GM12878 (cell line): ENCODE measurements at regions of chr9 and their contacts with region 1.

Region 1: GRCh38 chr9:124066783-124067563 is 55.4 kb downstream of the LHX2 start:
- DNase-seq: no peak
- ATAC-seq: no peak
- H3K4me3 ChIP-seq: no peak overlapping the region
- H3K27ac ChIP-seq: no peak overlapping the region
- H3K4me1 ChIP-seq: no peaks in the 10 kb centered on the region
- H3K27me3 ChIP-seq: peaks cover 0 to 3% of the 10 kb centered on the region in 2 experiments; a peak in 1 of 4 replicates
- CTCF ChIP-seq: no peak
- EP300 ChIP-seq: no peak
- POLR2A ChIP-seq: no peak
- RAD21 ChIP-seq: no peak

Region 2: DNA sequence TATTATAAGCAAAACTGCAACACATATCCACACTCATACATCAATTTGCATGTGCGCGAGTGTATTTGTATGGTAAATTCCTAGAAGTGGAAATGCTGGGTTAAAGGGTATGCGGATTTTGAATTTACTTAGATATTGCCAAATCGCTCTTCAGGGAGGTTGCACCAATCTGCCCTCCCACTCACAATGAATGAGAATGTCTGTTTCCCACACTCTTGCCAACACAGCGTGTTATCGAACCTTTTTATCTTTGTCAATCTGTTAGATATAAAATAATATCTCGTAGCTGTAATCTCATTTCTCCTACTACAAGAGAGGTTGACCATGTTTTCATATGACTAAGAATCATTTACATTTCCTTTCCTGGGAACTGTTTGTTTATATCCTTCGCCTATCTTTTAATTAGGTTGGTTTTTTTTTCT is 19.7 kb before region 1 on chr9:
- CTCF ChIA-PET with region 1: no interaction called
- POLR2A ChIA-PET with region 1: no interaction called
- RAD21 ChIA-PET with region 1: no interaction called
- SMC1A ChIA-PET with region 1: no interaction called
- in situ Hi-C with region 1: no loop called
- intact Hi-C with region 1: no loop called
- DNase-seq: no peak
- ATAC-seq: no peak
- H3K4me3 ChIP-seq: no peak overlapping the region
- H3K27ac ChIP-seq: no peak overlapping the region
- H3K4me1 ChIP-seq: no peaks in the 10 kb centered on the region
- H3K27me3 ChIP-seq: peaks cover 2 to 4% of the 10 kb centered on the region in 2 experiments
- CTCF ChIP-seq: no peak
- EP300 ChIP-seq: no peak
- POLR2A ChIP-seq: no peak
- RAD21 ChIP-seq: no peak

Region 3: GRCh38 chr9:124110307-124110915 is 43.4 kb after region 1 on chr9:
- CTCF ChIA-PET with region 1: no interaction called
- POLR2A ChIA-PET with region 1: no interaction called
- RAD21 ChIA-PET with region 1: no interaction called
- SMC1A ChIA-PET with region 1: no interaction called
- in situ Hi-C with region 1: no loop called
- intact Hi-C with region 1: loop called (anchors 1 kb)
- DNase-seq: no peak
- ATAC-seq: peak; percentile 74
- H3K4me3 ChIP-seq: no peak overlapping the region
- H3K27ac ChIP-seq: no peak overlapping the region
- H3K4me1 ChIP-seq: no peaks in the 10 kb centered on the region
- H3K27me3 ChIP-seq: no peaks in the 10 kb centered on the region; a peak in 1 of 4 replicates
- CTCF ChIP-seq: no peak
- EP300 ChIP-seq: no peak
- POLR2A ChIP-seq: no peak
- RAD21 ChIP-seq: no peak

Region 4: DNA sequence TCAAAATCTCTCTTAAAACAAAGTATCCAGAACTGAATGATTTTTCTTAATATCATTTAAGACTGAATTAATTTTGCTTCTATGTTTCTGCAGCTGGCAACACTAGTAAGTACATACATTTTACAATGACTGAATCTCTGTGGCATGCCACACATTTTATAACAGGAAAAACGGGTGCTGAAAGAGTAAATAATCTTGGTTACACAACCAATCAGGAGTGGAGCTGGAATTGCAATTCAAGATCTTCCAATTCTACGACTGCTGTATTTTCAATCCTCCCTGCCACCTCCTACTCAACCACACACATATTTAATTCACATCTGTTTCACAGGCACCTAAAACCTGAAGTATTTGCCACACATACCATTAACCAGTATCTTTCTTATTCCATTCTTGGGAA is 492.9 kb after region 1 on chr9:
- CTCF ChIA-PET with region 1: no interaction called
- POLR2A ChIA-PET with region 1: no interaction called
- RAD21 ChIA-PET with region 1: no interaction called
- SMC1A ChIA-PET with region 1: no interaction called
- in situ Hi-C with region 1: no loop called
- intact Hi-C with region 1: no loop called
- DNase-seq: no peak
- ATAC-seq: no peak
- H3K4me3 ChIP-seq: no peak overlapping the region
- H3K27ac ChIP-seq: no peak overlapping the region
- H3K4me1 ChIP-seq: no peaks in the 10 kb centered on the region
- H3K27me3 ChIP-seq: no peaks in the 10 kb centered on the region
- CTCF ChIP-seq: no peak
- EP300 ChIP-seq: no peak
- POLR2A ChIP-seq: no peak
- RAD21 ChIP-seq: no peak